ENCODE measurements at regions of chr20 and their contacts with region 1.

Region 1: GRCh38 chr20:63036291-63036690 is 29.5 kb upstream of the BHLHE23 start:
- DNase-seq: no peak
- H3K4me3 ChIP-seq: no peak overlapping the region
- H3K27ac ChIP-seq: no peak overlapping the region
- H3K4me1 ChIP-seq: no peaks in the 10 kb centered on the region
- H3K27me3 ChIP-seq: peaks cover 0 to 10% of the 10 kb centered on the region in 2 donors
- CTCF ChIP-seq: no peak
- POLR2A ChIP-seq: no peak

Region 2: GRCh38 chr20:62961310-62961783 is 74.9 kb before region 1 on chr20:
- intact Hi-C with region 1: no loop called
- DNase-seq: no peak
- H3K4me3 ChIP-seq: no peak overlapping the region
- H3K27ac ChIP-seq: no peak overlapping the region
- H3K4me1 ChIP-seq: no peaks in the 10 kb centered on the region
- H3K27me3 ChIP-seq: no peaks in the 10 kb centered on the region
- CTCF ChIP-seq: no peak
- POLR2A ChIP-seq: no peak

Region 3: DNA sequence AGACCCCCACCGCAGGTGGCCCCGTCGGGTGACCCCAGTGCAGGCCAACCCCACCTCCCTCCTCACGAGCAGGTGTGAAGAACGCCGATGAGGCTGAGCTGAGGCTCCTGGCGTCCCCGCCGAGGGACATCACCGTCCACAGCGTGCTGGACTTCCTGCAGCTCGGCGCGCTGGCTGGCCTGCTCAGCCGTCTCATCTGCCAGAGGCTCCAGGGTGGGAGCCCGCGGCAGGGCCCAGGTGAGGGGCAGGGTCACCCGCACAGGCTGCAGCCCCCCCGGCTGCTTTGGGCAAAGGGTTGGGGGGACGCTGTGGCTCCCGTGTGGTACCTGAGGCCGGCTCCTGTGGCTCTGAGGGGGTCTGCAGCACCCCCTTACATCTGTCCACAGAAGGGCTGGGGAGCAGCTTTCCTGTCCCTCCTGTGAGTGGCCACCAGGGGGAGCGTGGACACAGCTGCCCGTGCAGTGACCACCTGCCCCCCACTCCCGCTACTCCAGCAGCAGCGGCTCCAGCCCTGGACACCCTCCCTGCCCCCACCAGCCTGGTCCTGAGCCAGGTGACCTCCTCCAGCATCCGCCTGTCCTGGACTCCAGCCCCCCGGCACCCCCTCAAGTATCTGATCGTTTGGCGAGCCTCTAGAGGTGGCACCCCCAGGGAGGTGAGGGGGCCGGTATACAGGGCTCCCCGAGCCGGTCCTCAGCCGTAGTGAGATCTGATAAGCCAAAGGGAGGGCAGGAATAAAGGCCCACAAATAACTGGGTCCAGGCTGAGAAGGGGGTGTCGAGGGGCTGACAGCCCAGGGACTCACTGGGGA is 273.2 kb after region 1 on chr20:
- intact Hi-C with region 1: loop called (anchors 5 kb)
- DNase-seq: peak in 1 of 2 donors; percentile 39
- H3K4me3 ChIP-seq: no peak overlapping the region
- H3K27ac ChIP-seq: no peak overlapping the region
- H3K4me1 ChIP-seq: no peaks in the 10 kb centered on the region
- H3K27me3 ChIP-seq: peaks cover 0 to 10% of the 10 kb centered on the region in 2 donors
- CTCF ChIP-seq: peak; percentile 62 to 68 (median 66)
- POLR2A ChIP-seq: no peak

Measured in uterus (tissue), 4 donors.